Activated T-helper 1 cell treated with anti-CD3 and anti-CD28 coated beads, Interleukin-12 subunit alpha, Interleukin-12 subunit beta, Interleukin-2, Interleukin-4 antibody, amounts not matched to agents 30 ng/mL and 10 ng/mL and 1 ng/mL, durations not matched to agents 14 hours and 24 hours and 36 hours (primary cell): ENCODE measurements at regions of chr6 and their contacts with region 1.

Region 1: DNA sequence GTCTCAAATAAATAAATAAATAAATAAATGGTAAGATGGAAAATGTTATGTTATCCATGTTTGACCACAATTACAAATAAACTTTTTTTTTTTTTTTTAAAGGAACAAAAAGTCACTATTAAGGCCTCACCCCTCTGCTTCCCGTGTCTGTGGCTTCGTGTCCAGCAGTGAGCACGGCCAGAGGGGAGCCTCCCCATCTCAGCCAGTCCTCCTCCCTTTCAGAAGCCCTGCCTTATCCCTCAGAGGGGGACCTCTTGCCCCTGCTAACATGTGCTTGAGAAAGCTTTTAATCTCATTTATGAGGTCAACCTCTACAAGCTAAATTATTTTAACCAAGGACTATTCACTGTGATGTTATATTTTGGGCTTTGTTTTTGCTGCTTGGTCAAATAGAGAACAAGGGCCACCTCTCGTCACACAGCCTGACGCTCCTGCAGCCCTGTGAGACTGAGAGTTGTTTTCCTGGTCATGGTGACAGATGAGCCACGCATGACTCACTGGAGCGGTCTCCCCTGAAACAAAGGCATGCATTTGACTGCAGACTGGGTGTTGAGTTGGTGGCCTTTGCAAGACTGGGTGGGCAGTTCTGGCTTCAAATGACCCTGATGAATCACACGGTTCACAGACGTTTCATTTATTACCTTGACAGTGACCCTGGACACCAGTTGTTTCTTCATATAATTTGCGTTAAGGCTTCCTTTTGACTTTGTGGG is 131.8 kb downstream of the TIAM2 start:
- DNase-seq: no peak
- H3K4me3 Mint-ChIP-seq: peak overlapping the region; percentile 60
- H3K27ac Mint-ChIP-seq: peak overlapping the region; percentile 92
- H3K4me1 Mint-ChIP-seq: peaks cover 51% of the 10 kb centered on the region
- H3K27me3 Mint-ChIP-seq: no peaks in the 10 kb centered on the region

Region 2: GRCh38 chr6:155085582-155086257 is 41.2 kb before region 1 on chr6:
- intact Hi-C with region 1: no loop called
- DNase-seq: no peak
- H3K4me3 Mint-ChIP-seq: no peak overlapping the region
- H3K27ac Mint-ChIP-seq: no peak overlapping the region
- H3K4me1 Mint-ChIP-seq: peaks cover 12% of the 10 kb centered on the region
- H3K27me3 Mint-ChIP-seq: peaks cover 2% of the 10 kb centered on the region

Region 3: GRCh38 chr6:155154158-155154830 is 27.4 kb after region 1 on chr6:
- intact Hi-C with region 1: loop called (anchors 1 kb)
- DNase-seq: peak; percentile 48
- H3K4me3 Mint-ChIP-seq: peak overlapping the region; percentile 78
- H3K27ac Mint-ChIP-seq: peak overlapping the region; percentile 97
- H3K4me1 Mint-ChIP-seq: peaks cover 90% of the 10 kb centered on the region
- H3K27me3 Mint-ChIP-seq: peaks cover 2% of the 10 kb centered on the region